CD8-positive, alpha-beta T cell (primary cell): ENCODE measurements at regions of chr7 and their contacts with region 1.

Region 1: DNA sequence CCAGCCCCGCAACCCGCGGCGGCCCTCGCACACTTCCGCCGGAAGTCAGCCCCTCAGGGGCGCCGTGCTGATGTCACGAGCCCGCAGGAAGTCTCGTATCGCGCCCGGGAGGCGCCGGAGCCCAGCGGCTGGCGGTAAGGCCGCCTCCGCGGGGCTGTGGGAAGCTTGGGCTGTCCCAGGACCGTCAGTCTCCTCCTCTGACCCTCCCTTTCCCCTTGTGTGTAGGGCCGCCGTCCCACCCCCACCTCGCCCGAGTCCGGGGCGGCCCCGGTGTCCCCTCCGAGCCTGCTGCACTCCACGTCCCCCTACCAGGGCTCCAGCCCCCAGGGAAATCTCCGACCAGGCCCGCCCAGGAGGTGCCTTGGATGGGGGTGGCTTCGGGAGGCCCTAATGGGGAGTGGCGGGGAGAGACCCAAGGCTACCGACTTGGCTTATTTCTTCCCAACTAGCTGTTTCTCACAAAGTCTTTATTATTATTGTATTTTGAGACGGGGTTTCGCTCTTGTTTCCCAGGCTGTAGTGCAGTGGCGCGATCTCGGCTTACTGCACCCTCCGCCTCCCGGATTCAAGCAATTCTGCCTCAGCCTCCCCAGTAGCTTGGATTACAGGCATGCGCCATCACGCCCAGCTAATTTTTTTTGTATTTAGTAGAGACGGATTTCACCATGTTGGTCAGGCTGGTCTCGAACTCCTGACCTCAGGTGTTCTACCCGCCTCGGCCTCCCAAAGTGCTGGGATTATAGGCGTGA is at the start of gene ZDHHC4:
- DNase-seq: peak; percentile 75 to 95 (median 87)
- ATAC-seq: peak; percentile 90
- H3K4me3 ChIP-seq: peak within 1 kb of the TSS; percentile 83 to 90
- H3K4me3 Mint-ChIP-seq: peak within 1 kb of the TSS; percentile 86
- H3K27ac ChIP-seq: peak within 1 kb of the TSS; percentile 91 to 97
- H3K27ac Mint-ChIP-seq: peak within 1 kb of the TSS; percentile 94
- H3K4me1 ChIP-seq: peaks cover 4% of the 10 kb centered on the region
- H3K4me1 Mint-ChIP-seq: peaks cover 14% of the 10 kb centered on the region
- H3K27me3 ChIP-seq: no peaks in the 10 kb centered on the region
- H3K27me3 Mint-ChIP-seq: peaks cover 2% of the 10 kb centered on the region
- CTCF ChIP-seq: no peak
- total RNA-seq, gene ZDHHC4: 35.6 to 37.0 TPM

Region 2: GRCh38 chr7:6589829-6590644 is 12.5 kb after region 1 on chr7 and contains the start of gene INTS15:
- CTCF ChIA-PET with region 1: interaction called, 9 read pairs
- POLR2A ChIA-PET with region 1: interaction called, 29 read pairs
- intact Hi-C with region 1: loop called (anchors 1 kb)
- DNase-seq: peak; percentile 66 to 93 (median 82)
- ATAC-seq: peak; percentile 90
- H3K4me3 ChIP-seq: peak within 1 kb of the TSS; percentile 64 to 93
- H3K4me3 Mint-ChIP-seq: peak within 1 kb of the TSS; percentile 89
- H3K27ac ChIP-seq: peak within 1 kb of the TSS; percentile 69 to 83
- H3K27ac Mint-ChIP-seq: peak within 1 kb of the TSS; percentile 94
- H3K4me1 ChIP-seq: peaks cover 24% of the 10 kb centered on the region
- H3K4me1 Mint-ChIP-seq: peaks cover 21% of the 10 kb centered on the region
- H3K27me3 ChIP-seq: no peaks in the 10 kb centered on the region
- H3K27me3 Mint-ChIP-seq: no peaks in the 10 kb centered on the region
- CTCF ChIP-seq: peak; percentile 56
- total RNA-seq, gene INTS15: 48.8 to 52.3 TPM